Activated CD4-positive, alpha-beta T cell treated with anti-CD3 and anti-CD28 coated beads for 36 hours (primary cell): ENCODE measurements at regions of chr1 and their contacts with region 1.

Region 1: DNA sequence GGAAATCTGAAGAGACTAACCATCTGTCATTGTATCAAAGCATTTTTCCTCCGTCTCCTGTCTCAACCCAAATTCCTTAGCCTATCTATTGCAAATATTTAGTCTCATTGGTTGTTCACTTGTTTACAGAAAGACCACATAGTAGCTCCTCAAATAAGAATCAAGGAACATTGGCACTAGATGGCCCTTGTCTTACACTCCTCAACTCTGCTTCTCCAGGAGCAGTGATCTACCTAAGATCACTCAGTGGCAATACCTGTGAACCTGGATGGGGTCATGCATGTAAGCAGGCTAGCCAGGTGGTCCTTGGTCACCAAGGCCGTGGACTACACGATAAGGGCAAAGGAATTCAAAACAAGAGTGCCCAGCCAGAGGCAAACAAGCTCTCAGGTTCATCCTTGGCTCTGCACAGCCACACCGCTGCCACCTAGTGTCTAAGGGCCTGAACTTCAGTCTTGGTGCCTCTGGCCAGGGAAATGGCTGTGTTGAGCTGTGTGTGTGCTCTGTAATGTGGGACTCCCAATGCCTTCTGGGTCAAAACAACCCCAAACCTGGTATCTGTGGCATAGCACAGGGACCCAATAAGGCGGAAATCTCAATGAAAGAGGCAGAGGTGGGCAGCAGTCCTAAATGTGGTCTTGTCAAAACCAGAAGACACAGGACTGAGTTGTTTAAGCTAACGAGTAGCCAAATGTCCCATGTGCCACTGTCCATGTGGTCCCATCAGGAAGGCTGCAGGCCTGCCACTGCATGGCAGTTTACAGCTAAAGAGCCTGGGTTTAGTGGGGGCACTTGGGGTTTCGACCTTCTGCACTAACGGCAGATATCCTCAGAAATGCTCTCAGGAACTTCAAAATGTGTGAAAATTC is 54.5 kb downstream of the GPR161 start:
- DNase-seq: peak; percentile 84
- ATAC-seq: peak; percentile 92
- H3K4me3 Mint-ChIP-seq: no peak overlapping the region
- H3K27ac Mint-ChIP-seq: peak overlapping the region; percentile 45
- H3K4me1 Mint-ChIP-seq: no peaks in the 10 kb centered on the region
- H3K27me3 Mint-ChIP-seq: no peaks in the 10 kb centered on the region

Region 2: GRCh38 chr1:167803358-167804207 is 278.7 kb before region 1 on chr1:
- CTCF ChIA-PET with region 1: no interaction called
- POLR2A ChIA-PET with region 1: no interaction called
- intact Hi-C with region 1: loop called in 1 of 2 experiments (anchors 1 kb)
- DNase-seq: peak; percentile 96
- ATAC-seq: peak; percentile 94
- H3K4me3 Mint-ChIP-seq: peak overlapping the region; percentile 64
- H3K27ac Mint-ChIP-seq: peak overlapping the region; percentile 97
- H3K4me1 Mint-ChIP-seq: peaks cover 24% of the 10 kb centered on the region
- H3K27me3 Mint-ChIP-seq: peaks cover under 1% of the 10 kb centered on the region

Region 3: GRCh38 chr1:168054117-168054516 is 28.1 kb before region 1 on chr1:
- CTCF ChIA-PET with region 1: interaction called, 12 read pairs
- POLR2A ChIA-PET with region 1: no interaction called
- intact Hi-C with region 1: no loop called
- DNase-seq: no peak
- ATAC-seq: no peak
- H3K4me3 Mint-ChIP-seq: no peak overlapping the region
- H3K27ac Mint-ChIP-seq: no peak overlapping the region
- H3K4me1 Mint-ChIP-seq: no peaks in the 10 kb centered on the region
- H3K27me3 Mint-ChIP-seq: no peaks in the 10 kb centered on the region

Region 4: DNA sequence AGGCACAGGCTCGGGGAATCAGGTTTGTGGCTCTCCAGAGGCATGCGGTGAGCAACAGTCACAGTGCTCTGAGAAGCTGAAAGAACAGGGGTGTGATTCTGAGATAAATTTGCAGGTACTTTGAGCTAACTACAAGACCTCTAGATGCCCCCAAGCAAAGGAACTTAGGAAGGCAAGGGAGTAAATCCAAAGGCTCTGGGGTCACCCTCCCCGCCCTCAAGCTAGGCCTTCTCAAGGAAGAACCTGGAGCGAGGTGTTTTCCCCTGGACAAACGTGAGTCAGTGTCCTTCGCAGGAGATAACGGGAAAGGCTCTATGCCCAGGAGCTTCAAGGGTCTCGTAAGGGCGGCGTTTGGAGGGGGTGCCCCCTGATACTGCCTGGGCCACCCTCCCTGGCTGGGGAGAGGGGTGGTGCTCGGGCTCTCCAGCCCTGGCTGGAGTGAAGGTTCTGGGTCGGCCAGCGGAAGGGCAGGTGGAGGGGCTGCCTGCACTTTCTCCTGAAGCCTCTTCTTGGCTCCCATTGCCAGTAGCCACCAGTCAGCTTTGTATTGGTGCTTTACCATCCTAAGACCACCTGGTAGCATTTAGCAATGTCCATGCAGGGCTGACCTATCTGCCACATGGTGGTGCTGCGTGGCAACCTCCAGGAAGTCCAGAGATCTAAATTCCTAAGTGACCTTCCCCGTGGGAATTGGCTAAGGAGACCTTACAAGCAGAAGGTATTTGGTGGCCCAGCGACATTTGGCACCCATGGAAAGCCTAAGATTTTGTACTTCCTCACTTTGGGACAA is 10.5 kb after region 1 on chr1:
- CTCF ChIA-PET with region 1: interaction called, 41 read pairs
- POLR2A ChIA-PET with region 1: no interaction called
- intact Hi-C with region 1: no loop called
- DNase-seq: no peak
- ATAC-seq: no peak
- H3K4me3 Mint-ChIP-seq: no peak overlapping the region
- H3K27ac Mint-ChIP-seq: no peak overlapping the region
- H3K4me1 Mint-ChIP-seq: no peaks in the 10 kb centered on the region
- H3K27me3 Mint-ChIP-seq: peaks cover 3% of the 10 kb centered on the region

Region 5: DNA sequence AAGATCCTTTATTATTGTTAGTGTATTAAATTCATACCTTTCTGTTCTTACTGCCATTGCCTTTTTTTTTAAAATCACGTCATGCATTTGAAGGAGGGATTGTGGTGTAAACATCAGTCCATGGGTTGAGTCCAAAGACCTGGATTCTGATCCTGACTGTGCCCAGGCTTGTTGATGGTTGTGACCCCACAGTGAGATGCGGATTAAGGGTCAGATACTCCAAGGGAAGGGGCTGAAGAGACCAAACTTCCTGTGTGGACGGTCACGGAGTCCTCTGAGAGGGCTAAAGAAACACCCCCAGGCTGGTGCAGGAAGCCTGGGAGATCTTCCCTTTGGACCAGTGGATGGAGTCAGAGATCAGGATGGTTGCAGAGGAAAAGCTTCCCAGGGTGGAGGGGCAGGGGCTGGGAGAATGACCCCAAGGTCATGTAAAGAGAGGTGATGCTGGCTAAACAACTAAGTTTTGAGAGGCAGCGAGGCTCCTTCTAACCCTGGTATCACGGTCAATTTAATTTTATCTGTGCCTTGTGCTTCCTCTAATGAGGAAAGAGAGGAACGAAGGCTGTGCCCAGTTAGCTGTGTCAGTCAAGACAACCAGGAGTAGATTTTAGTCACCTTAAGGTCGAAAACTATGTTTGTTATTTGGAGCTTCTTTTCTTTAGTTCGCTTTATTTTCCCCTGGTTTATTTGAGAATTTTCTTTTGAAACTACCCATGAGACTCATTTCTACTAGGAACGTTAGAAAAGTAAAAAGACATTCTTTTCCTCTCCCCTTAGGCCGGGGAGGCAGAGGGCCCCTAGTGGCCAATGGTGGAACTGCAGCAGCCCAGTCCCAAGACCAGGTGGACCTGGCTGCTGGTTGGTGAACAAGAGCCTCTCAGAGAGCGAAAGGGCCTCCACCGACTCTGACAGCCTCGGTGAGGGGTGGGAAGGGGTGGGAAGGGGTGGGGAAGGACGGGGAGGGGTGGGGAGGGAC is 63.2 kb after region 1 on chr1:
- CTCF ChIA-PET with region 1: interaction called, 13 read pairs
- POLR2A ChIA-PET with region 1: no interaction called
- intact Hi-C with region 1: loop called in 1 of 2 experiments (anchors 1 kb)
- DNase-seq: peak; percentile 93
- ATAC-seq: peak; percentile 100
- H3K4me3 Mint-ChIP-seq: no peak overlapping the region
- H3K27ac Mint-ChIP-seq: no peak overlapping the region
- H3K4me1 Mint-ChIP-seq: peaks cover 13% of the 10 kb centered on the region
- H3K27me3 Mint-ChIP-seq: peaks cover 1% of the 10 kb centered on the region